ENCODE measurements at regions of chr11 and their contacts with region 1.

Region 1: DNA sequence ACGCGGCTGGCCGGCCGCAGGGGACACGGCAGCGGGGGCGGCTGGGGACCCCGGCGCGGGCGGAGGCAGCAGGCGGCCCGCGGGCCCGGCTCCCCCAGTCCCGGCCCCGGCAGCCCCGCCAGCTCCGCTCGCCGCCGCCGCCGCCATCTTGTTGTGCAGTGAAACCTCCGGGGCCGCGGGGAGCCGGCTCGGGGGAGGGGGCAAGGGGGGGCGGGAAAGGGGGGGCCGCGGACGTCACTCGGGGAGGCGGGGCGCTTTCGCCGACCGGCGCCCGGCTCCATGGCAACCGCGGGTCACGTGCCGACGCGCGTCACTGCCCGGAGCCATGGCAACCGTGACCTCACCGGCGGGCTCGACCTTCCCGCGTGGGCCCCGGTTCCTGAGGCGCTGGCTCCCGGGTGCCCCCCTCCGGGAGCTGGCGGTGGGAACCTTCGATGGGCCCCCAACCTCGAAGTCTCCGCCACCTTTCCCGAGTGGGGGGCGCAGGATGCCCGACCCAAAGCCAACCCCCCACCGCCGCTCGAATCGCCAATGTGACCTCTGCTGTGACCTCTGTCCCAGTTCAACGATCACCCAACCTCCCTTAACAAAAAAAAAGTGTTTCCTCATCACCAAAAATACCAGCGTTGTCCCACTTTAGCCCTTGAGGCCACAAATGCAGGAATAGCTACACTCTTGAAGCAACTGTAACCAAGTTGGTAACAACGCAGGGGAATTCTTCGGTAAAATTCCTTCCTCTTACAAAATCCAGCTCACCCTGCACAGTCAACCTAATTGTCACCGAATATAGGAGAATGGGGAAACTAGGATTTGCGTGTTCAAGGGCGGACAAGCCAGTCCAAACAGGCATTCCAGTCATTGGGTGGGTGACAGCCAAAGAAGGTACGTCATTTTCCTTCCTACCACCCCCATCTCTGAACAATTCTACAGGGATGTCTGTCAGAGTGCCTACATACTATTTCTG is at the start of gene SIK3:
- DNase-seq: peak; percentile 90 to 98 (median 93)
- ATAC-seq: peak; percentile 71
- H3K4me3 ChIP-seq: peak within 1 kb of the TSS; percentile 75 to 84
- H3K4me3 Mint-ChIP-seq: peak within 1 kb of the TSS; percentile 97
- H3K27ac ChIP-seq: peak within 1 kb of the TSS; percentile 88 to 100
- H3K27ac Mint-ChIP-seq: peak within 1 kb of the TSS; percentile 99
- H3K4me1 ChIP-seq: peaks cover 44% of the 10 kb centered on the region
- H3K4me1 Mint-ChIP-seq: peaks cover 47% of the 10 kb centered on the region
- H3K27me3 ChIP-seq: no peaks in the 10 kb centered on the region
- H3K27me3 Mint-ChIP-seq: no peaks in the 10 kb centered on the region
- CTCF ChIP-seq: peak; percentile 33
- total RNA-seq, gene SIK3: 96.6 to 107 TPM

Region 2: GRCh38 chr11:116772443-116773202 is 325.9 kb before region 1 on chr11 and contains the start of gene BUD13:
- CTCF ChIA-PET with region 1: interaction called, 3 read pairs
- POLR2A ChIA-PET with region 1: interaction called, 3 read pairs
- intact Hi-C with region 1: loop called (anchors 2 to 5 kb)
- DNase-seq: peak; percentile 88 to 96 (median 96)
- ATAC-seq: peak; percentile 92
- H3K4me3 ChIP-seq: peak within 1 kb of the TSS; percentile 97 to 98
- H3K4me3 Mint-ChIP-seq: peak within 1 kb of the TSS; percentile 97
- H3K27ac ChIP-seq: peak within 1 kb of the TSS; percentile 87 to 95
- H3K27ac Mint-ChIP-seq: peak within 1 kb of the TSS; percentile 97
- H3K4me1 ChIP-seq: peaks cover 24% of the 10 kb centered on the region
- H3K4me1 Mint-ChIP-seq: peaks cover 35% of the 10 kb centered on the region
- H3K27me3 ChIP-seq: no peaks in the 10 kb centered on the region
- H3K27me3 Mint-ChIP-seq: no peaks in the 10 kb centered on the region
- CTCF ChIP-seq: no peak
- total RNA-seq, gene BUD13: 12.5 TPM

Region 3: DNA sequence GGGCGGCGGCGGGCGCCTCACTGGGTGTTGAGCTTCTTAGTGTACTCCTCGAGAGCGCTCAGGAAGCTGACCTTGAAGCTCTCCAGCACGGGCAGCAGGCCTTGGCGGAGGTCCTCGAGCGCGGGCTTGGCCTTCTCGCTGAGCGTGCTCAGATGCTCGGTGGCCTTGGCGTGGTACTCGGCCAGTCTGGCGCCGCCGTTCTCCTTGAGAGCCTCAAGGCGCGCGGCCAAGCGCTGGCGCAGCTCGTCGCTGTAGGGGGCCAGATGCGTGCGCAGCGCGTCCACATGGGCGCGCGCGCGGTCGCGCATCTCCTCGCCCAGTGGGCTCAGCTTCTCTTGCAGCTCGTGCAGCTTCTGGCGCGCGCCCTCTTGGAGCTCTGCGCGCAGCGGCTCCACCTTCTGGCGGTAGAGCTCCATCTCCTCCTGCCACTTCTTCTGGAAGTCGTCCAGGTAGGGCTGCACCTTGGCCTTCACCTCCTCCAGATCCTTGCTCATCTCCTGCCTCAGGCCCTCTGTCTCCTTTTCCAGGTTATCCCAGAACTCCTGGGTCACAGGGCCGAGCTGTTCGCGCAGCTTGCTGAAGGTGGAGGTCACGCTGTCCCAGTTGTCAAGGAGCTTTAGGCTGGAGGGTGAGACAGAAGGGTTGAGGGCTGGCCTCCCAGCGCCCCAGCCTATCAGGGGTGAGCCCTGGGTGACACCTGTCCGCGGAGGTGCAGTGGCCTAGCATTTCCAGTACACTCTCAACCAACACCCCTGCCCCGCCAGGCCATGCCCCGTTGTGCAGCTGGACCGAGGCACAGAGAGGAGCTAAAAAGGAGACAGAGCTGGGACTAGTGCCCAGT is 262.5 kb before region 1 on chr11:
- CTCF ChIA-PET with region 1: interaction called, 9 read pairs
- POLR2A ChIA-PET with region 1: interaction called, 9 read pairs
- intact Hi-C with region 1: loop called in 1 of 2 experiments (anchors 5 kb)
- DNase-seq: peak; percentile 65 to 92 (median 82)
- ATAC-seq: peak; percentile 97
- H3K4me3 ChIP-seq: peak overlapping the region; percentile 63 to 64
- H3K4me3 Mint-ChIP-seq: peak overlapping the region; percentile 84
- H3K27ac ChIP-seq: peak overlapping the region; percentile 57 to 63
- H3K27ac Mint-ChIP-seq: peak overlapping the region; percentile 70
- H3K4me1 ChIP-seq: peaks cover 16% of the 10 kb centered on the region
- H3K4me1 Mint-ChIP-seq: peaks cover 14% of the 10 kb centered on the region
- H3K27me3 ChIP-seq: no peaks in the 10 kb centered on the region
- H3K27me3 Mint-ChIP-seq: no peaks in the 10 kb centered on the region
- CTCF ChIP-seq: peak; percentile 54

Region 4: GRCh38 chr11:116890193-116890592 is 208.4 kb before region 1 on chr11:
- CTCF ChIA-PET with region 1: interaction called, 64 read pairs
- POLR2A ChIA-PET with region 1: interaction called, 4 read pairs
- intact Hi-C with region 1: no loop called
- DNase-seq: peak in 2 of 9 experiments; percentile 29 to 41
- ATAC-seq: peak; percentile 70
- H3K4me3 ChIP-seq: no peak overlapping the region
- H3K4me3 Mint-ChIP-seq: no peak overlapping the region
- H3K27ac ChIP-seq: peak overlapping the region in 1 of 2 experiments; percentile 53
- H3K27ac Mint-ChIP-seq: peak overlapping the region; percentile 5
- H3K4me1 ChIP-seq: peaks cover 7% of the 10 kb centered on the region
- H3K4me1 Mint-ChIP-seq: peaks cover 21% of the 10 kb centered on the region
- H3K27me3 ChIP-seq: no peaks in the 10 kb centered on the region
- H3K27me3 Mint-ChIP-seq: no peaks in the 10 kb centered on the region
- CTCF ChIP-seq: no peak

Region 5: GRCh38 chr11:117020869-117021564 is 77.5 kb before region 1 on chr11:
- CTCF ChIA-PET with region 1: no interaction called
- POLR2A ChIA-PET with region 1: no interaction called
- intact Hi-C with region 1: loop called in 1 of 2 experiments (anchors 5 kb)
- DNase-seq: no peak
- ATAC-seq: no peak
- H3K4me3 ChIP-seq: no peak overlapping the region
- H3K4me3 Mint-ChIP-seq: no peak overlapping the region
- H3K27ac ChIP-seq: no peak overlapping the region
- H3K27ac Mint-ChIP-seq: peak overlapping the region; percentile 12
- H3K4me1 ChIP-seq: peaks cover 36% of the 10 kb centered on the region
- H3K4me1 Mint-ChIP-seq: peaks cover 68% of the 10 kb centered on the region
- H3K27me3 ChIP-seq: no peaks in the 10 kb centered on the region
- H3K27me3 Mint-ChIP-seq: no peaks in the 10 kb centered on the region
- CTCF ChIP-seq: no peak

Region 6: GRCh38 chr11:117072517-117073461 is 25.8 kb before region 1 on chr11:
- CTCF ChIA-PET with region 1: no interaction called
- POLR2A ChIA-PET with region 1: no interaction called
- intact Hi-C with region 1: loop called in 1 of 2 experiments (anchors 2 kb)
- DNase-seq: peak in 2 of 9 experiments; percentile 43 to 57
- ATAC-seq: peak; percentile 46
- H3K4me3 ChIP-seq: no peak overlapping the region
- H3K4me3 Mint-ChIP-seq: no peak overlapping the region
- H3K27ac ChIP-seq: no peak overlapping the region
- H3K27ac Mint-ChIP-seq: no peak overlapping the region
- H3K4me1 ChIP-seq: peaks cover 27% of the 10 kb centered on the region
- H3K4me1 Mint-ChIP-seq: peaks cover 69% of the 10 kb centered on the region
- H3K27me3 ChIP-seq: no peaks in the 10 kb centered on the region
- H3K27me3 Mint-ChIP-seq: no peaks in the 10 kb centered on the region
- CTCF ChIP-seq: no peak

Region 7: GRCh38 chr11:117178210-117179034 is 79.9 kb after region 1 on chr11 and contains the start of gene SIDT2:
- CTCF ChIA-PET with region 1: no interaction called
- POLR2A ChIA-PET with region 1: no interaction called
- intact Hi-C with region 1: loop called in 1 of 2 experiments (anchors 2 kb)
- DNase-seq: peak; percentile 78 to 94 (median 90)
- ATAC-seq: peak; percentile 92
- H3K4me3 ChIP-seq: peak within 1 kb of the TSS; percentile 57 to 76
- H3K4me3 Mint-ChIP-seq: peak within 1 kb of the TSS; percentile 96
- H3K27ac ChIP-seq: peak within 1 kb of the TSS; percentile 50 to 80
- H3K27ac Mint-ChIP-seq: peak within 1 kb of the TSS; percentile 97
- H3K4me1 ChIP-seq: peaks cover 24% of the 10 kb centered on the region
- H3K4me1 Mint-ChIP-seq: peaks cover 29% of the 10 kb centered on the region
- H3K27me3 ChIP-seq: no peaks in the 10 kb centered on the region
- H3K27me3 Mint-ChIP-seq: no peaks in the 10 kb centered on the region
- CTCF ChIP-seq: no peak
- total RNA-seq, gene SIDT2: 133 to 134 TPM